Caco-2 (cell line): ENCODE measurements at regions of chr1 and their contacts with region 1.

Region 1: DNA sequence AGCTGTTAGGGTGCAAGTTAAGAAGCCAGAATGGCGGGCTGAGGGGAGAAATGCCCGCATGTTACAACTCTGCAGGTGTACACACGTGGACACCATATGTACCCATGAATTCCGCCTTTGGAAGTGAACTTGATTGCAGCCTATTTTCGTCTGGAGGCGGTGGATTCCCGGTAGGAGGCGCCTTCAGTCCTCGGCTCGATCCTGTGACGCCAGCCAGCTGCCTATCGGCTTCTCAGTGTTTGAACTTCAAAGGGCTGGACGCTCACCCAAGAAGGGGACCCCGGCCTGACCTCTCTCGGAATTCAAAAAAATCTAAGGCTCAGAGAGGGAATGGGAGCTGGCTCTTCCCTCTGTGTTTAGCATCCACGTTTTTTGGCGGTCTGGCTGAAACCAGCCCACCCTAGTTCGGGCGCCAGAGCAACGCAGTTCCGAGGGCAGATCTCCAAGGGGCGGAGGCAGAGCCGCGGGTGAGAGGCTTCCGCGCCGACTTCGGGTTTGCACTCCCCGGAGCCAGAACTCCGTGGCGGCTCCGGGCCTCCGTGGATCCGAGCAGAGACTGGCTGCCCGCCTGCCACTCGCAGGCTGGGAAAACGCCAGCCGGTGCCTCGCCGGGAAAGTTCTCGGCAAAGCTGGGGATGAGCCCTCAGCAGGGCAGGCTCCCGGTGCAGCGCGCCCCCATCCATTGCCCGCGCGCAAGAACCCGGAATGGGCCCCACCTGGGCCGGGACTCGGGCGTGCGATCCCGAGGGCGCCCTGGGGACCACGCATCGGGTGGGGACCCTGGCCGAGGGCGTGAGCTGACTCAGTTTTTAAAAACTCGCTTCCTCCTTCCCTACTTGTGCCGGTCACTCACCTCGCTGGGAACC is 996 bp upstream of the TMEM51 start:
- DNase-seq: peak; percentile 82 to 83
- H3K4me3 ChIP-seq: peak overlapping the region; percentile 71
- H3K4me3 Mint-ChIP-seq: peak overlapping the region; percentile 87
- H3K27ac Mint-ChIP-seq: peak overlapping the region; percentile 73
- H3K4me1 ChIP-seq: peaks cover 36% of the 10 kb centered on the region
- H3K4me1 Mint-ChIP-seq: peaks cover 15% of the 10 kb centered on the region
- H3K27me3 ChIP-seq: no peaks in the 10 kb centered on the region
- H3K27me3 Mint-ChIP-seq: no peaks in the 10 kb centered on the region
- CTCF ChIP-seq: peak; percentile 48 to 63

Region 2: GRCh38 chr1:15128520-15129313 is 23.8 kb before region 1 on chr1:
- CTCF ChIA-PET with region 1: interaction called, 21 read pairs
- POLR2A ChIA-PET with region 1: interaction called, 4 read pairs
- intact Hi-C with region 1: loop called (anchors 1 kb)
- DNase-seq: peak; percentile 72 to 82
- H3K4me3 ChIP-seq: no peak overlapping the region
- H3K4me3 Mint-ChIP-seq: no peak overlapping the region
- H3K27ac Mint-ChIP-seq: no peak overlapping the region
- H3K4me1 ChIP-seq: peaks cover 8% of the 10 kb centered on the region; the same call in 1 of the 2 replicates
- H3K4me1 Mint-ChIP-seq: no peaks in the 10 kb centered on the region
- H3K27me3 ChIP-seq: no peaks in the 10 kb centered on the region
- H3K27me3 Mint-ChIP-seq: no peaks in the 10 kb centered on the region
- CTCF ChIP-seq: peak; percentile 78 to 79

Region 3: DNA sequence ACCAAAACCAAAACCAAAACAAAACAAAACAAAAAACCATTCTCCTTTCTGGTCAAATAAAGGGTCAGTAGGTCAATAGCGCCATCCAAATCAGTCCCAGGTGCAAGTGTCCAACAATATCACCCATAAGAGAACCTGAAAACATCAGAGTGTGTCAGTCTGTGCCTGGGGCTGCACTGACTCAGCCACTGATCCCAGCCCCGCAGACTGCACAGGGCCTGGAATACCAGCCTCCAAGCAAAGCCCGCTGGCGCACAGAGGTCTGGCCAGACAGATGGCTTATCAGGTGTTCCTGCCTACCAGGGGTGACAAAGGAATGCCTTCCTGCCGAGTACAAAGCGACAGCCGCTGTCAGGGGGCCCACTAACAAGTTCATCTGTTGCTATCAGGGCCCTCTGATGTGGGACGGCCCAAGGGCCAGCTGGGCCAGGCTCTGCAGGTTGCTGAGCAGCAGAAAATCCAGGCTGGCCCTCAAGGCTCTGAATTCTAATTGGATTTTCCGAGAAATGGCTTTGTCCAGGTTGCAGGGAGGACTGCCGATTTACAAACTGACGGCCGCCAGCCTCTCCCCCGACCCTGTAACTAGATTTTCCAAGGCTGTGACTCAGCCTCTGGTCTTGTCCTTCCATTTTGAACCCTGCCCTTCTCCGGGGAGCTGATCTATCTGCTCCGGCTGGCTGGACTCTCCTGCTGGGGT is 12.7 kb before region 1 on chr1:
- CTCF ChIA-PET with region 1: interaction called, 4 read pairs
- POLR2A ChIA-PET with region 1: interaction called, 4 read pairs
- intact Hi-C with region 1: loop called (anchors 1 kb)
- DNase-seq: peak; percentile 88 to 93
- H3K4me3 ChIP-seq: no peak overlapping the region
- H3K4me3 Mint-ChIP-seq: no peak overlapping the region
- H3K27ac Mint-ChIP-seq: peak overlapping the region; percentile 66
- H3K4me1 ChIP-seq: peaks cover 8% of the 10 kb centered on the region
- H3K4me1 Mint-ChIP-seq: peaks cover 23% of the 10 kb centered on the region
- H3K27me3 ChIP-seq: no peaks in the 10 kb centered on the region
- H3K27me3 Mint-ChIP-seq: no peaks in the 10 kb centered on the region
- CTCF ChIP-seq: no peak

Region 4: GRCh38 chr1:15173863-15174614 is 21.5 kb after region 1 on chr1:
- CTCF ChIA-PET with region 1: interaction called, 4 read pairs
- POLR2A ChIA-PET with region 1: interaction called, 4 read pairs
- intact Hi-C with region 1: loop called (anchors 2 kb)
- DNase-seq: peak; percentile 72 to 73
- H3K4me3 ChIP-seq: no peak overlapping the region
- H3K4me3 Mint-ChIP-seq: peak overlapping the region; percentile 50
- H3K27ac Mint-ChIP-seq: peak overlapping the region; percentile 46
- H3K4me1 ChIP-seq: peaks cover 43% of the 10 kb centered on the region
- H3K4me1 Mint-ChIP-seq: peaks cover 39% of the 10 kb centered on the region
- H3K27me3 ChIP-seq: no peaks in the 10 kb centered on the region
- H3K27me3 Mint-ChIP-seq: no peaks in the 10 kb centered on the region
- CTCF ChIP-seq: no peak

Region 5: GRCh38 chr1:15188130-15188524 is 35.6 kb after region 1 on chr1:
- CTCF ChIA-PET with region 1: interaction called, 24 read pairs
- POLR2A ChIA-PET with region 1: interaction called, 7 read pairs
- intact Hi-C with region 1: loop called (anchors 1 kb)
- DNase-seq: no peak
- H3K4me3 ChIP-seq: no peak overlapping the region
- H3K4me3 Mint-ChIP-seq: no peak overlapping the region
- H3K27ac Mint-ChIP-seq: peak overlapping the region; percentile 75
- H3K4me1 ChIP-seq: peaks cover 78% of the 10 kb centered on the region
- H3K4me1 Mint-ChIP-seq: peaks cover 33% of the 10 kb centered on the region
- H3K27me3 ChIP-seq: no peaks in the 10 kb centered on the region
- H3K27me3 Mint-ChIP-seq: no peaks in the 10 kb centered on the region
- CTCF ChIP-seq: no peak

Region 6: GRCh38 chr1:15196807-15197530 is 44.4 kb after region 1 on chr1:
- CTCF ChIA-PET with region 1: interaction called, 14 read pairs
- POLR2A ChIA-PET with region 1: interaction called, 7 read pairs
- intact Hi-C with region 1: loop called (anchors 1 kb)
- DNase-seq: peak; percentile 75 to 81
- H3K4me3 ChIP-seq: no peak overlapping the region
- H3K4me3 Mint-ChIP-seq: peak overlapping the region; percentile 43
- H3K27ac Mint-ChIP-seq: peak overlapping the region; percentile 80
- H3K4me1 ChIP-seq: peaks cover 64% of the 10 kb centered on the region
- H3K4me1 Mint-ChIP-seq: peaks cover 43% of the 10 kb centered on the region
- H3K27me3 ChIP-seq: no peaks in the 10 kb centered on the region
- H3K27me3 Mint-ChIP-seq: no peaks in the 10 kb centered on the region
- CTCF ChIP-seq: no peak

Region 7: GRCh38 chr1:15231714-15232201 is 79.2 kb after region 1 on chr1:
- CTCF ChIA-PET with region 1: no interaction called
- POLR2A ChIA-PET with region 1: no interaction called
- intact Hi-C with region 1: no loop called
- DNase-seq: no peak
- H3K4me3 ChIP-seq: no peak overlapping the region
- H3K4me3 Mint-ChIP-seq: no peak overlapping the region
- H3K27ac Mint-ChIP-seq: no peak overlapping the region
- H3K4me1 ChIP-seq: no peaks in the 10 kb centered on the region
- H3K4me1 Mint-ChIP-seq: no peaks in the 10 kb centered on the region
- H3K27me3 ChIP-seq: no peaks in the 10 kb centered on the region
- H3K27me3 Mint-ChIP-seq: no peaks in the 10 kb centered on the region
- CTCF ChIP-seq: no peak

Region 8: GRCh38 chr1:15272009-15272788 is 119.6 kb after region 1 on chr1:
- CTCF ChIA-PET with region 1: interaction called, 7 read pairs
- POLR2A ChIA-PET with region 1: no interaction called
- intact Hi-C with region 1: loop called (anchors 1 kb)
- DNase-seq: peak; percentile 66 to 72
- H3K4me3 ChIP-seq: no peak overlapping the region
- H3K4me3 Mint-ChIP-seq: peak overlapping the region; percentile 50
- H3K27ac Mint-ChIP-seq: no peak overlapping the region
- H3K4me1 ChIP-seq: no peaks in the 10 kb centered on the region
- H3K4me1 Mint-ChIP-seq: no peaks in the 10 kb centered on the region
- H3K27me3 ChIP-seq: no peaks in the 10 kb centered on the region
- H3K27me3 Mint-ChIP-seq: no peaks in the 10 kb centered on the region
- CTCF ChIP-seq: peak; percentile 67 to 78